CD4-positive, alpha-beta memory T cell (primary cell): ENCODE measurements at regions of chr11 and their contacts with region 1.

Region 1: GRCh38 chr11:13962562-13963168 is at the start of gene SPON1:
- DNase-seq: peak; percentile 33 to 63 (median 47)
- H3K4me3 ChIP-seq: peak within 1 kb of the TSS in 1 of 2 donors; percentile 33
- H3K4me3 Mint-ChIP-seq: peak within 1 kb of the TSS; percentile 69 to 95 (median 82)
- H3K27ac ChIP-seq: no peak within 1 kb of the TSS
- H3K27ac Mint-ChIP-seq: peak within 1 kb of the TSS in 1 of 7 donors; percentile 6
- H3K4me1 ChIP-seq: peaks cover 26% of the 10 kb centered on the region
- H3K4me1 Mint-ChIP-seq: peaks cover 0 to 22% (median 18%) of the 10 kb centered on the region in 4 donors
- H3K27me3 ChIP-seq: peaks cover 27% of the 10 kb centered on the region
- H3K27me3 Mint-ChIP-seq: peaks cover 33 to 43% of the 10 kb centered on the region in 2 donors
- total RNA-seq, gene SPON1: 58.1 to 60.4 TPM

Region 2: DNA sequence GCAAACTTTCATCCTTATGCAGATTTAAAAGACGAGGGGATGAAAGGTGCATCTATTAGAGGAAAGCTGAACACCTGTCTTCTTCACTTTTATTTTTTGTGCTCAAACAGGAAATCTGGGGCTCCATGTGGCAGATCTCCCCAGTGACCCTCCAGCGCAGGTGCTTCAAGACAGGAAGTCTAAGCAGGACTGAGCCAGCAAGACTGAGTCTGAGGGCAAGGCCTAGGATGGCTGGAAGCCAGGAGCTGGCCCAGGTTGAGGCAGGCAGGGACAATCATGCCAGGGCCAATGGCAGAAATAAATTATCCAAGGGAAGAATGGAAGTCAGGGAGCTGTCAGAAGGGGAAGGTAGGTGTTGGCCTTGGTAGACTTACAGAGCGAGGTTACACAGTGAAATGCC is 101.3 kb before region 1 on chr11:
- CTCF ChIA-PET with region 1: interaction called, 30 read pairs
- POLR2A ChIA-PET with region 1: interaction called, 8 read pairs
- intact Hi-C with region 1: loop called (anchors 1 kb)
- DNase-seq: peak in 3 of 5 donors; percentile 16 to 25 (median 24)
- H3K4me3 ChIP-seq: no peak overlapping the region
- H3K4me3 Mint-ChIP-seq: peak overlapping the region in 7 of 8 donors; percentile 2 to 64 (median 33)
- H3K27ac ChIP-seq: no peak overlapping the region
- H3K27ac Mint-ChIP-seq: peak overlapping the region; percentile 37 to 90 (median 83)
- H3K4me1 ChIP-seq: peaks cover 23% of the 10 kb centered on the region
- H3K4me1 Mint-ChIP-seq: peaks cover 18 to 35% (median 31%) of the 10 kb centered on the region in 4 donors
- H3K27me3 ChIP-seq: no peaks in the 10 kb centered on the region
- H3K27me3 Mint-ChIP-seq: no peaks in the 10 kb centered on the region

Region 3: GRCh38 chr11:13868710-13869397 is 93.8 kb before region 1 on chr11:
- CTCF ChIA-PET with region 1: interaction called, 7 read pairs
- POLR2A ChIA-PET with region 1: interaction called, 37 read pairs
- intact Hi-C with region 1: no loop called
- DNase-seq: peak; percentile 80 to 91 (median 84)
- H3K4me3 ChIP-seq: no peak overlapping the region
- H3K4me3 Mint-ChIP-seq: peak overlapping the region in 7 of 8 donors; percentile 1 to 56 (median 43)
- H3K27ac ChIP-seq: peak overlapping the region; percentile 55
- H3K27ac Mint-ChIP-seq: peak overlapping the region; percentile 77 to 97 (median 96)
- H3K4me1 ChIP-seq: peaks cover 32% of the 10 kb centered on the region
- H3K4me1 Mint-ChIP-seq: peaks cover 30 to 49% (median 35%) of the 10 kb centered on the region in 4 donors
- H3K27me3 ChIP-seq: no peaks in the 10 kb centered on the region
- H3K27me3 Mint-ChIP-seq: no peaks in the 10 kb centered on the region

Region 4: GRCh38 chr11:13923716-13924650 is 38.7 kb before region 1 on chr11:
- CTCF ChIA-PET with region 1: interaction called, 29 read pairs
- POLR2A ChIA-PET with region 1: interaction called, 44 read pairs
- intact Hi-C with region 1: loop called (anchors 5 kb)
- DNase-seq: peak; percentile 37 to 66 (median 50)
- H3K4me3 ChIP-seq: peak overlapping the region in 1 of 2 donors; percentile 31
- H3K4me3 Mint-ChIP-seq: peak overlapping the region; percentile 15 to 92 (median 84)
- H3K27ac ChIP-seq: peak overlapping the region; percentile 46
- H3K27ac Mint-ChIP-seq: peak overlapping the region; percentile 95 to 99 (median 96)
- H3K4me1 ChIP-seq: peaks cover 59% of the 10 kb centered on the region
- H3K4me1 Mint-ChIP-seq: peaks cover 54 to 85% (median 65%) of the 10 kb centered on the region in 4 donors
- H3K27me3 ChIP-seq: no peaks in the 10 kb centered on the region
- H3K27me3 Mint-ChIP-seq: no peaks in the 10 kb centered on the region

Region 5: GRCh38 chr11:13942983-13943382 is 19.7 kb before region 1 on chr11:
- CTCF ChIA-PET with region 1: interaction called, 147 read pairs
- POLR2A ChIA-PET with region 1: interaction called, 29 read pairs
- intact Hi-C with region 1: no loop called
- DNase-seq: no peak
- H3K4me3 ChIP-seq: no peak overlapping the region
- H3K4me3 Mint-ChIP-seq: no peak overlapping the region
- H3K27ac ChIP-seq: no peak overlapping the region
- H3K27ac Mint-ChIP-seq: peak overlapping the region in 2 of 7 donors; percentile 9 to 32
- H3K4me1 ChIP-seq: peaks cover 56% of the 10 kb centered on the region
- H3K4me1 Mint-ChIP-seq: peaks cover 40 to 59% (median 48%) of the 10 kb centered on the region in 4 donors
- H3K27me3 ChIP-seq: no peaks in the 10 kb centered on the region
- H3K27me3 Mint-ChIP-seq: no peaks in the 10 kb centered on the region

Region 6: DNA sequence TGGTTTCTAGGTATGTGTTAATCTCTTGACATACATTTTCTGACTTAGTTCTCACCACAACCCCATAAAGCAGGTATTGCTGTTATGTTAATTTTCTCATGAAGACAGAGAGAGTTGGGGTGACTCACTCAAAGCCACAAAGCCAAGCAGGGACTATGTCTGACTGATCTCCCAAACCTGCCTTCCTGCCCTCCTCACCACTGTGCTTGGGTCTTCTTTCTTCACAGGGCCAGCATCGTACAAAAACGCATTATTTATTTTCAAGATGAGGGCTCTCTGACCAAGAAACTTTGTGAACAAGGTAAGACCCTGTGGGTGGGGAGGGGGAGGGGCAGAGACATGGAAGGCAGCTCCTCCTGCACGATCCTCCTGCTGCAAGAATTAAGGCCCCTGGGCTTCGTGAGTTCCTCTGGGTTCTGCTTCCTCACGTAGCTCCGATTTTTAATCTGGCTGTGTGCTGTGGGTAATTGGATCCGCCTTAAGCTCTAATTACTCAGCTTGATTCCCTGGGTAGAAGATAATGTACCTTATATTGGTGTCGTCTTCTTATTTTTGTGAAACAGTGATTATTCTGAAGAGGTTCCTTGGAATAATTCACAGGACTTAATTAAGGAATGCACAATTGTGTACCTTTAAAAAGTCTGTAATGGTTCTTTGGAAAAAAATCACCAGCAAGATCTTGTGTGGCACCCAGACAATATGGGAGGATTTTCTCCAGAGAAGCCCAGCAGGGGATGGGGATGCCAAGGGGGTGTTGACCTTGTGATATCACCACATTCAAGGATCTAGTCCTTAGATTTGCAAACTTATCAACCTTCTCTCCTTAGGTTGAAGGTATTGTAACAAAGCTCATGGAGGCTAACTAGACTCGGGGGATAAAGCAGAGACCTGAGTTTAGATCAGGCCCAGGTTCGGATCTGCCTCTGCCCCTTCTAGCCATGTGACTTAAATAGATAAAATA is 112.7 kb after region 1 on chr11:
- CTCF ChIA-PET with region 1: interaction called, 7 read pairs
- POLR2A ChIA-PET with region 1: interaction called, 3 read pairs
- intact Hi-C with region 1: loop called (anchors 5 kb)
- DNase-seq: peak; percentile 64 to 84 (median 71)
- H3K4me3 ChIP-seq: no peak overlapping the region
- H3K4me3 Mint-ChIP-seq: peak overlapping the region; percentile 55 to 84 (median 75)
- H3K27ac ChIP-seq: peak overlapping the region; percentile 33
- H3K27ac Mint-ChIP-seq: peak overlapping the region; percentile 76 to 92 (median 83)
- H3K4me1 ChIP-seq: peaks cover 60% of the 10 kb centered on the region
- H3K4me1 Mint-ChIP-seq: peaks cover 40 to 61% (median 52%) of the 10 kb centered on the region in 4 donors
- H3K27me3 ChIP-seq: no peaks in the 10 kb centered on the region
- H3K27me3 Mint-ChIP-seq: peaks cover 0 to 2% of the 10 kb centered on the region in 2 donors

Region 7: DNA sequence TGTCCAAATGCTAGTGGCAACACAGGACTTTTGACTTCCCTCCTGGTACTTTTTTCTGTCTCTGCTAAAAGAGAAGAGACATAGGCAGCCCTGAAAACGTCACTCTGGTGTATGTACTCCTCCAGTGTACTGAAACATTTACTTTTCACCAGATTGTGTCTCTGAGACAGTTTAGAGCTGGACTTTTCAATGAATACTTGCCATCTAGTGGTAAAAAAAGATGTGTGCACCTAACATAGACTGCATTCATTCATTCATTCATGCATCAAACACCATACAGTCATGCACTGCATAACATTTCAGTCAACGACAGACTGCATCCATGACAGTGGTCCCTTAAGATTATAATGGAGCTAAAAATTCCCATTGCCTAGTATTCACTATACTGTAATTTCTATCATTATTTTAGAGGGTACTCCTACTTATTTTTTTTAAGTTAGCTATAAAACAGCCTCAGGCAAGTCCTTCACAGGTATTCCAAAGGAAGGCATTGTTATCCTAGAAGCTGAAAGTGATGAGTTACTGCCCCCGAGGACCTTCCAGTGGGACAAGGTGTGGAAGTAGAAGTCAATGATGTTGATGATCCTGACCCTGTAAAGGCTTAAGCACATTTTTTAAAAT is 186.1 kb after region 1 on chr11:
- CTCF ChIA-PET with region 1: interaction called, 83 read pairs
- POLR2A ChIA-PET with region 1: interaction called, 7 read pairs
- intact Hi-C with region 1: no loop called
- DNase-seq: peak in 4 of 5 donors; percentile 39 to 51 (median 42)
- H3K4me3 ChIP-seq: no peak overlapping the region
- H3K4me3 Mint-ChIP-seq: no peak overlapping the region
- H3K27ac ChIP-seq: no peak overlapping the region
- H3K27ac Mint-ChIP-seq: peak overlapping the region in 1 of 7 donors; percentile 10
- H3K4me1 ChIP-seq: no peaks in the 10 kb centered on the region
- H3K4me1 Mint-ChIP-seq: peaks cover 0 to 4% (median 1%) of the 10 kb centered on the region in 4 donors
- H3K27me3 ChIP-seq: no peaks in the 10 kb centered on the region
- H3K27me3 Mint-ChIP-seq: no peaks in the 10 kb centered on the region